Right ventricle myocardium superior (tissue), 1 donor: ENCODE measurements at regions of chr3 and their contacts with region 1.

Region 1: DNA sequence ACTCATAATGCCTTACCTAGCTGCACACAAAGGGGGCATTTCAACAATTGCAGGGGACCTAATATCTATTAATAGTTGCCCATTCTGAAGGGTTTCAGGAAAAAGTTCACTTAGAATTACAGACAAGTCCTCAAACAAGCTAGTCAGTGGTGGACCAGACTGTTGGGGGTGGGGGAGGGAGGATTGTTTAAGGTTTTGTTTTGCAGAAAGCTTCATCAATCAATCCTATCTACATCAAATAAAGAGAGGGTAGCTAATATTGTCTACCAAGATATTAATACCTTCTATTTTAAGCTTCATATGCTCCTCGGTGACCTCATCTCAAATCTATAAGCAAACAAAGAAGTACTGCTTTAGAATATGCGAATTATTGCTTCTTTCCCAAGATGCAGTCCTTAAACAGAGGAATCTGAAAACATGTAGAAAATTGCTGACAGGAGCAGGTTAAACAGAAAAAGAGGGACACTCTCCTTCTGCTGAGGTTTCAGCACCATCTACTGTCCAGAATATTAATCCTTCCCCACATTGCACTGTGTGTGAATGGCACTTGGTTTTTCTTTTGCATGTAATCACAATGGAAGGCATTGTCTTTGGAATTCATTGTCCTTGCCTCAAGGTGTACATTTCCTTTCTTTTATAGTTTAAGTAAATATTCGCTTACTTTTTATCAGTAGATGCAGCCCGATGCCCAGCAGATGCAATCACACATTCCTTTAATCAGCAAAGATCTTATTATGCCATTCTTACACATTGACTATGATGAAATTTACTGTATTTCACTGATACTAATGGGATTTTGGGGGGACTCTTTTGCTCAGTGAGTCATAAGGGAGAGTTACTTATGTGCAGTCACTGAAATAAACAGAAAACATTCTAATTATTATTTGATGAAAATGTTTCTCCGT is 94.7 kb downstream of the IL5RA start:
- DNase-seq: no peak
- ATAC-seq: peak; percentile 87

Region 2: DNA sequence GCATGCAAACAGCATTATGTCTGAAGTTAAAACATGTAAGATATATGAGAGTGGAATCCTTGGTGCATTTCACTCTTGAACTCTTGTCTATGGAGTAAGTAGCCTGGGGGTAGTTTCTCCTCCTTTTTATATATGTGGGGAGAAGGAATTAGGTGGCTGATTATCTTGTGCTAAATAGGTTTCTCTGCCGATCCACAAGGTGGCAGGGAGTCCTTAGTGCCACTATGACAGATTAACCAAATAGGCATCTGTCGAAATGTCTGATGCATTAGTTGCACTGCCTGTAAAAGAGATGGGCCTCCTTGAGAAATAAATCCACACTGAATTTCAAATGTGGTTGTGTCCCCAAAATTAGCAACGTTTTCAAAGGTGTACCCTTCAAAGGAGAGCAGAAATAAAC is 746.7 kb before region 1 on chr3:
- intact Hi-C with region 1: loop called (anchors 5 kb)
- DNase-seq: no peak
- ATAC-seq: no peak

Region 3: GRCh38 chr3:3286014-3286413 is 270.6 kb after region 1 on chr3:
- intact Hi-C with region 1: no loop called
- DNase-seq: no peak
- ATAC-seq: no peak